ENCODE measurements at regions of chr15 and their contacts with region 1.

Region 1: DNA sequence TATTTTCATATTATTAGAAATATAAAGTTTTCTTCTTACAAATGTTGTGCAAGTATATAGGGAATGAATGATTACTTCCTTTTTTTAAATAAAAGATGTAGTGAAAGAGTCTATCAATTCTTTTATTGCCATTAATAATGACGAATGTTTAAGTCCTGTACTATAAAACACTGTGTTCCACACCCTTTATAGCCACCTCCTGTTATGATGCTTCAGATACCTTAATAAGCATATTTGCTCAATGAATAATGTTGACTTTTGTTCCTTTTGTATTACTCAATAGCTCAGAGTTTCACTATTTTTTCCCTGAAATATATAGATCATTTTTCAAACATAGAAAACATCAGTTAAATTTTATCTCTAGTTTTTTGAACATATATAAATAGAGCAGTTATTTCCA is 378.2 kb upstream of the THBS1 start:
- DNase-seq: no peak
- H3K4me3 ChIP-seq: no peak overlapping the region
- CTCF ChIP-seq: no peak

Region 2: DNA sequence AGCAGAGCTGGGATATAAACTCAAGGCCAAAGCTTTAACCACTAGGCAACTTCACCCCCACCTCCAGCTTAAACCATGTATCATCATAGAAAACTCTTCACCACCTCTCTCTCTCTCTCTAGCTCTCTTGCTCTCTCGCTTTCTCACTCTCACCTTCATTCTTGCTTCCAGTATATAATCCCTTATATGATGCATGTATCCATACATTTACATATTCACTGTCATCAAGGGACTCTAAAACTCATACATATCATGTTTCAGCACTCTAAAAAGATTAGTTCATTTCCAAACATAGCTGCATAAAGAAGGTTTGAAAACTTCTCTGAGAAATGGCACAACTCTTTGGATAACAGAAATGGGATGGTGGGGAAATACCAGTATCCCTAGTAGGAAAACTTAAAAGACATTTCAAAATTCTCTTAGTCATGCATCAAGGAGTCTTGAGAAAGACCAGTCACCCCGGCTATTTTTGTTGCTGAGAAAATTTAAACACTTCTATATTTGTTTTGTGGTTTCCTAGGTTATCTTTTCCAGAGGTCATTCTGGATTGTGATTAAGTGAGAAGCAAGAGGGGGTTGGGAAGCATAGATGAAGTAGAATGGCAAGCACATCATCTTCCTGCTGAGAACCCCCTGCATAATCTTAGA is 69.6 kb before region 1 on chr15:
- in situ Hi-C with region 1: loop called (anchors 5 kb)
- DNase-seq: peak; percentile 13
- H3K4me3 ChIP-seq: no peak overlapping the region
- CTCF ChIP-seq: no peak

Region 3: GRCh38 chr15:39376371-39376909 is 173.8 kb after region 1 on chr15:
- in situ Hi-C with region 1: no loop called
- DNase-seq: no peak
- H3K4me3 ChIP-seq: no peak overlapping the region
- CTCF ChIP-seq: no peak

Measured in astrocyte of the cerebellum (primary cell).